Right ventricle myocardium inferior (tissue), 1 donor: ENCODE measurements at regions of chr2 and their contacts with region 1.

Region 1: GRCh38 chr2:160324161-160324800 is 124.2 kb upstream of the ITGB6 start:
- DNase-seq: no peak
- ATAC-seq: peak; percentile 49

Region 2: GRCh38 chr2:160241251-160242137 is 82.8 kb before region 1 on chr2:
- intact Hi-C with region 1: no loop called
- DNase-seq: no peak
- ATAC-seq: no peak

Region 3: DNA sequence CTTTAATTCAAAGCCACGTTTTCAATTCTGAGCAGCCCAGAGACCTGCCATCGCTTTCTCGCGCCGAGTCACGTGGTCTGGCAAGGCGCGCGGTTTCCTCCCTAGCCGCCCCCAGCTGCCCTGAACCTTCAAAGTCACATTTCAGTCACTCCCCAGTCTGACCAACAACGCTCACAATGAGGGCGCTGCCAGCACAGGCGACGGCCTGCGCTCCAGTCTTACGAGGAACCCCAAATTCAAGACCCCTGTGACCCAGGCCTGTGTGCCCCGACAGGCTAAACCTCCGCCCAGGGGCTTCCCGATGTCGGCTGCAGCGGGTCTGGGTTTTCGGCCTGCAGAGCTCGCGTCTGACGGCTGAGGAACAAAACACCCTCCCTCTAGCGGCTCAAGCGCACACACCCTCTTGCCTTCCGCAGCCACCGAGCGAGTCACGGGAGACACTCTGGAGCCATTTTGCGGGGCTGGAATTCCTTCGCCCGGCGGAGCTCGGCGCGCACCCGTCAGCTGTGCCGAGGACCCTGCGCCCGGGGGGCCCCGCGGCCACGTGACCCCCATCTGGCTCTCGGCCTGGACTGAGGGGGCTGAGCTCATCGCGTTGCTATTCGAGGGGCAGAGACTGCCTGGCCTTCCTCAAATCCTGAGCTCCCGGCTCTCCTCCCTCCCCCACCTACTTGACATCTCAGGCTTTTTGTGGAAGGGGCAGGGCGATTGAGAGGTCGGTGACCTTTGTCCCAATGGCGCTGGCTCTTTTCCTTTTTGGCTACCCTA is 54.3 kb before region 1 on chr2:
- intact Hi-C with region 1: no loop called
- DNase-seq: peak; percentile 90
- ATAC-seq: peak; percentile 87

Region 4: GRCh38 chr2:160910681-160911080 is 586.4 kb after region 1 on chr2:
- intact Hi-C with region 1: loop called (anchors 5 kb)
- DNase-seq: no peak
- ATAC-seq: peak; percentile 81